T-cell (primary cell): ENCODE measurements at regions of chr11 and their contacts with region 1.

Region 1: DNA sequence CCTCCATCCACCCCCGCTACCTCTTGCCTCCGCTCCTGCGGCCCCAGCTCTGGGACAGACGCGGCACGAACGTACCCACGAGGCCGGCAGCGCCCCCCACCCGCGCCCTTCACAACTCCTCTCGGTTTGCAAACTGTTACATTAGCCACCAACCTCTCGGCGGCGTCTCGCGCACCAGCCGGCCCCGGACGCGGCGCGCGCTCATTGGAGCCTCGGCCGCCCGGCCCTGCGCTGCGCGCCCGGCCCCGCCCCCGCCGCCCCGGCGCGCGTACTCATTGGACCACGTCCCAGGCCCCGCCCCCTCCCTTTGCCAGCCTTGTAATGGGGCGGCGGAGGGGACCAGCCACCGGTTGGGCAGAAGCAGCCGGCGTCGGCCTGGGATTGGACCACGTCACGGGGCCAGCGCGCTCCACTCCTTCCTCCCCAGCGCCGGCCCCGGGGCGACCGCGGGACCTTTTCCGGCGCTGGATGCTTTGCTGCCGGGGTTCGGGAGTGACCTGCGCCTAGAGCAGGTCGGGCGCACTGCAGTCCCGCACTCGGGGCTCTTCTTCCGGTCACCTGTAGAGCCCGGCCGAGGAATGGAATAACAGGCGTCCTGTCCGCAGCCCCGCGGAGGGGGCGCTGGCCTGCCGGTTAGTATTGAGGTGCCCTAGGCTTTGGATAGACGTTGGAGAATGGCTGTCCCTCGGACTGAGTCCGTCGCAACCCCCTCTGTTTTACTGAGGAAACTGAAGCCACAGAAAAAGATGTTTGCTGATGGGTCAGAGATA is at the start of gene HYOU1:
- DNase-seq: peak; percentile 95 to 100 (median 98)
- ATAC-seq: peak; percentile 90 to 97 (median 93)
- H3K4me3 ChIP-seq: peak within 1 kb of the TSS; percentile 77
- H3K4me3 Mint-ChIP-seq: peak within 1 kb of the TSS; percentile 94 to 95 (median 94)
- H3K27ac ChIP-seq: peak within 1 kb of the TSS; percentile 63
- H3K27ac Mint-ChIP-seq: peak within 1 kb of the TSS; percentile 94 to 95
- H3K4me1 ChIP-seq: peaks cover 12 to 28% of the 10 kb centered on the region in 2 experiments
- H3K4me1 Mint-ChIP-seq: peaks cover 34 to 45% (median 36%) of the 10 kb centered on the region in 3 donors
- H3K27me3 ChIP-seq: no peaks in the 10 kb centered on the region
- H3K27me3 Mint-ChIP-seq: no peaks in the 10 kb centered on the region
- total RNA-seq, gene HYOU1: 91.2 to 113 (median 112) TPM

Region 2: GRCh38 chr11:118953265-118953664 is 103.9 kb before region 1 on chr11:
- CTCF ChIA-PET with region 1: interaction called in 1 of 2 experiments, 10 read pairs
- POLR2A ChIA-PET with region 1: no interaction called
- DNase-seq: no peak
- ATAC-seq: no peak
- H3K4me3 ChIP-seq: no peak overlapping the region
- H3K4me3 Mint-ChIP-seq: no peak overlapping the region
- H3K27ac ChIP-seq: no peak overlapping the region
- H3K27ac Mint-ChIP-seq: no peak overlapping the region
- H3K4me1 ChIP-seq: peaks cover 0 to 10% of the 10 kb centered on the region in 2 experiments
- H3K4me1 Mint-ChIP-seq: peaks cover 5 to 11% (median 6%) of the 10 kb centered on the region in 3 donors
- H3K27me3 ChIP-seq: peaks cover 0 to 31% of the 10 kb centered on the region in 2 experiments
- H3K27me3 Mint-ChIP-seq: peaks cover 0 to 13% of the 10 kb centered on the region in 2 donors

Region 3: DNA sequence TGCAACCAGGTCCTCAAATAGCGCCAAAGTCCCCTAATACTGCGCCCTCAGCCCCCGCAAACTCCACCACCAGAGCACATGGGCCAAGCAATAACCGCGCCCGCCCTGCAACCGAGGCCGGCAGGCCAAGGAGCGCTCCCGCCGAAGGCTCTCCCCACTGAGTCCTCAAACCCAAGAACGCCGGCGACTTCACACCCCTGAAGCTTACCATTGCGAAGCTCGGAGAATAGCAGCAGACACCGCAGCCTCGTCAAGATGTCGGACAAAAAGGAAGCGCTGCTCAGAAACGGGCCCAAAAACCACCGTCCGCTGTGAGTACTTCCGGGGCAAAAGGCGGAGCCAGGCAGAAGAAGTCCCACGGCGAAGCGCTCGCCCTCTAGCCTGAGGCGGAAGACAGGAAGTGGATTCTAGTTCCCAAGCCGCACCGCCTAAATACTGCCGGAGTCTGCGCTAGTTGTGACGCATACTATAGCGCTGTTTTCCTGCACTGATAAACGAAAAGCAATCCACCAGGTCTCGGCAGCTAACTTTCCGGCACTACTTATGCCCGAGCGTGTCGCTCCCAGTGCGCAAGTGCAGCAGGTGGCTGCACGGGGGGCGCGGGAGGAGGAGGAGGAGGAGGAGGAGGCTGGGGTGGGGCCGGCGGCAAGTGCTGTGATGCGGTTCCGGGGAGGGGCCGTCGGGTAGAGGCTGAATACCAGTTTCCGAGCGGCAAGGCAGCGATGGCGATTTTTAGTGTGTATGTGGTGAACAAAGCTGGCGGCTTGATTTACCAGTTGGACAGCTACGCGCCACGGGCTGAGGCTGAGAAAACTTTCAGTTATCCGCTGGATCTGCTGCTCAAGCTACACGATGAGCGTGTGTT is 38.9 kb before region 1 on chr11 and contains the starts of genes RPS25 and TRAPPC4:
- CTCF ChIA-PET with region 1: no interaction called
- POLR2A ChIA-PET with region 1: interaction called in 1 of 2 experiments, 15 read pairs
- DNase-seq: peak; percentile 84 to 99 (median 97)
- ATAC-seq: peak; percentile 88 to 92 (median 90)
- H3K4me3 ChIP-seq: peak within 1 kb of the TSS; percentile 95 to 98
- H3K4me3 Mint-ChIP-seq: peak within 1 kb of the TSS; percentile 96 to 99 (median 99)
- H3K27ac ChIP-seq: peak within 1 kb of the TSS; percentile 96
- H3K27ac Mint-ChIP-seq: peak within 1 kb of the TSS; percentile 100
- H3K4me1 ChIP-seq: peaks cover 15 to 45% of the 10 kb centered on the region in 2 experiments
- H3K4me1 Mint-ChIP-seq: peaks cover 53 to 68% (median 64%) of the 10 kb centered on the region in 3 donors
- H3K27me3 ChIP-seq: no peaks in the 10 kb centered on the region
- H3K27me3 Mint-ChIP-seq: no peaks in the 10 kb centered on the region
- total RNA-seq, gene RPS25: 1,733 to 2,728 (median 2,161) TPM
- total RNA-seq, gene TRAPPC4: 65.0 to 78.5 (median 74.3) TPM

Region 4: DNA sequence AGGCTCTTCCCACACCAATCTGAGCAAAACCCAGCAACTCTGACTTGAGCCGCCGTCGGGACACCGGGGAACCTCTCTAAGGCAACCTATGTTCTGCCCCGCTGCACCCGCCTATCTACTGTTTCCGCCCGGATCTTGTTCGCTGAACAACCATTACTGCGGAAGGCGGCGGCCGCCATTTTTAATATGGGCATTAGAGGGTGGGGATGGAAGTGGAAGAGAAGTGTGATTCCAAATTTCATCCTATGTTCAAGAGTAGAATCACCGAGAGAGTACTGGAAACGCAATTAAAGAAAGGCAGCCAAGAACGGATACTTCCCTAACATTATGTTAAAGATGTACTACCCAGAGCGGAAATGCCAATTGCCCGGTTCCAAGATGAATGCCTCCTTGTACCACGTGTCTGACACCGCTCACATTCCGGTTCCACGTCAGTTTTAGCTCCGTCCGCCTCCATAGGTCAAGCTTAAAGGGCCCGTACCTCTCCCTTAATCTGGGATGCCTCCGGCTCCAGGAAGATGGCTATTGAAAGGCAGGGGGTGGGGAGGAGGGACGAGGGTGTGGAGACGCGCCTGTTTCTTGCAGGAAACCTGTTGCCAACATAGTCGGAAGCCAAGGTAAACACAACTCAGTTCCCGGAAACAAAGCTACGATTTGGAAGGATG is 44.7 kb after region 1 on chr11 and contains the start of gene DPAGT1:
- CTCF ChIA-PET with region 1: no interaction called
- POLR2A ChIA-PET with region 1: no interaction called
- DNase-seq: peak; percentile 70 to 89 (median 80)
- ATAC-seq: peak; percentile 85 to 90 (median 86)
- H3K4me3 ChIP-seq: peak within 1 kb of the TSS; percentile 83 to 98
- H3K4me3 Mint-ChIP-seq: peak within 1 kb of the TSS; percentile 86 to 98 (median 97)
- H3K27ac ChIP-seq: peak within 1 kb of the TSS; percentile 87
- H3K27ac Mint-ChIP-seq: peak within 1 kb of the TSS; percentile 99 to 100
- H3K4me1 ChIP-seq: peaks cover 16 to 35% of the 10 kb centered on the region in 2 experiments
- H3K4me1 Mint-ChIP-seq: peaks cover 39 to 57% (median 53%) of the 10 kb centered on the region in 3 donors
- H3K27me3 ChIP-seq: no peaks in the 10 kb centered on the region
- H3K27me3 Mint-ChIP-seq: no peaks in the 10 kb centered on the region
- total RNA-seq, gene DPAGT1: 21.7 to 54.2 (median 43.9) TPM